ENCODE measurements at regions of chr17 and their contacts with region 1.

Region 1: GRCh38 chr17:63946440-63947367 is 14.6 kb upstream of the CD79B start:
- DNase-seq: peak; percentile 42
- H3K4me3 Mint-ChIP-seq: peak overlapping the region; percentile 23
- H3K27ac Mint-ChIP-seq: peak overlapping the region; percentile 84
- H3K4me1 Mint-ChIP-seq: peaks cover 12% of the 10 kb centered on the region
- H3K27me3 Mint-ChIP-seq: peaks cover 2% of the 10 kb centered on the region

Region 2: DNA sequence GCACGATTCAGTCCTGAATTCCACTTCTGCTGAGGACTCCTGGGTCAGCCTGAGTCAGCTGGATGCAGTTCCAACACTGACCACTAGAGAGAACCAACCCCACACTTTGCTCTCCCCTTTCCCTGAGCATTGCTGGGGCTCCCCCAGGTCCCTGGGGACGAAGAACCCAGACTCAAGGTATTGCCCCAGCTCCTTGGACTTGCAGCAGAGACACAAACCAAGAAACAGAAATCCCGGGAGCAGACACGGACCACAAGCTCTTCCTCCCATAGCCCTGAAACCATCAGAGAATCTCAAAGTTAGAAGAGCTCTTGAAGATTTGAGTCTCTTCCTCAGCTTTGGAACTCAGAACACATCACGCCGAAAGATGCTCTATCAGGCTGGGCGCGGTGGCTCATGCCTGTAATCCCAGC is 27.4 kb before region 1 on chr17:
- intact Hi-C with region 1: loop called (anchors 2 kb)
- DNase-seq: peak; percentile 64
- H3K4me3 Mint-ChIP-seq: no peak overlapping the region
- H3K27ac Mint-ChIP-seq: no peak overlapping the region
- H3K4me1 Mint-ChIP-seq: peaks cover 8% of the 10 kb centered on the region
- H3K27me3 Mint-ChIP-seq: peaks cover 8% of the 10 kb centered on the region

Region 3: GRCh38 chr17:63984651-63985386 is 38.1 kb after region 1 on chr17:
- intact Hi-C with region 1: loop called (anchors 5 kb)
- DNase-seq: peak; percentile 50
- H3K4me3 Mint-ChIP-seq: no peak overlapping the region
- H3K27ac Mint-ChIP-seq: peak overlapping the region; percentile 73
- H3K4me1 Mint-ChIP-seq: peaks cover 18% of the 10 kb centered on the region
- H3K27me3 Mint-ChIP-seq: no peaks in the 10 kb centered on the region

Region 4: DNA sequence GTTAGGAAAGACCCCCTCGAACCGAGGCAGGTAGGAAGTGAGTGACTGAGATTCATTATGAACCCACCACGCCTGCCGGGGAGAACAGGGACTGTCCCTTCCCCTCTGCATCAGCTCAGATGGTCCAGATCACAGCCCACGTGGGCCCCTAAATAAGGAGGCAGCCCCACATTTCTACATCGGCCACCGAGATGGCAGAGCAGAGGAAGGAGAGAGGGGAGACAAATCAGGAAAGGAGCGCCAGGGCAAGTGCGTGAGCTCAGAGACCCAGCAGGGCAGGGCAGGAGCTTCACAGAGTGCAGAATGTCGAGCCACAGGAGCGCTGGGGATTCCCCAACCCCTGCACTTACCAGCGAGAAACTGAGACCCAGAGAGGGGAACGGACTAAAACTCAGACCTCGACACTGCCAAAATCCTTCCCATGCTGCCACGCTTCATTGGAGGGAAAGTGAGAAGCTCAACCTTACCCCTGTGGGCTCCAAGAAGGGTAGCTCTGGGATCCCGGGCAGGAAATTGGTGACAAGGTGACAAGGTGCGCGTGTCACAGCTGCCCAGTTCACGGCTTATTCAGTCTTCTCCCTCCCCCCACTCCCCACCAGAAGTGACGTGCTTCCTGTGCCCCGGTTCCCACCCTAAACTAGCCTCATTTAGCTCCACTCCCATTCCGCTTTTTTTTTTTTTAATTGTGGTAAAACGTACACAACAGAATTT is 73.5 kb after region 1 on chr17 and contains the start of gene ICAM2:
- intact Hi-C with region 1: loop called (anchors 5 kb)
- DNase-seq: peak; percentile 88
- H3K4me3 Mint-ChIP-seq: peak within 1 kb of the TSS; percentile 99
- H3K27ac Mint-ChIP-seq: peak within 1 kb of the TSS; percentile 99
- H3K4me1 Mint-ChIP-seq: peaks cover 60% of the 10 kb centered on the region
- H3K27me3 Mint-ChIP-seq: no peaks in the 10 kb centered on the region
- total RNA-seq, gene ICAM2: 83.2 and 85.6 TPM in 2 replicates